Adrenal gland (tissue), 19 donors: ENCODE measurements at regions of chr11 and their contacts with region 1.

Region 1: DNA sequence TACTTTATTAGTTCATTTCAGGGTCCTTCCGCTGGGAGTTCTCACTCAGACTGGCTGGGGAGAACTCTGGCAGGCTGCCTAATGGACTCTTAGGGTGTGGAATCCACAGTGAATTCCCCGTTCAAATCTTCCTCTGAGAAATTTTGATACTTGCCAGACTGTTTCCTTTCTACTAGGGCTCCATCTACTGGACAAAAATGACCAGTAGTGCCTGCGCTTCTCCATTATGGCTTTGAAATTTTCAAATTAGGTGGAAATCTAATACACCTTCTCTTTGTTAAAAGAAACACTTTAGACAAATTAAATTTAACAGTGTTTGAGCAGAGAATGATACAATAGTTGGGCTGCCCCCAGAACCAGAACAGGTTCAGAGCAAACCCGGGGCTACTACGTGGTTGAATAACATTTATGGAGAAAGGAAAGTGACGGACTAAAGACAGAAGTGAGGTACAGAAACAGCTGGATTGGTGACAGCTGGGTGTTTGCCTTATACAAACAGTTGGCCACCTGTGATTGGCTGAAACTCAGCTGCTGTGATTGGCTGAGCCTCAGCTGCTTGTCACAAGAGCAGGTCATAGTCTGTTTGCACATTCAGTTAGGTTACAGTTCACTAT is 52.9 kb upstream of the FDX1 start:
- DNase-seq: peak; percentile 76 to 93 (median 87)
- H3K4me3 ChIP-seq: peak overlapping the region in 1 of 4 donors; percentile 43
- H3K27ac ChIP-seq: peak overlapping the region; percentile 49 to 87 (median 72)
- H3K4me1 ChIP-seq: peaks cover 40 to 73% of the 10 kb centered on the region in 2 donors
- H3K27me3 ChIP-seq: no peaks in the 10 kb centered on the region
- CTCF ChIP-seq: peak; percentile 68 to 88 (median 82)
- POLR2A ChIP-seq: peak in 1 of 2 donors; percentile 60

Region 2: GRCh38 chr11:110429731-110430266 is 53.0 kb after region 1 on chr11 and contains the start of gene FDX1:
- intact Hi-C with region 1: loop called in 1 of 2 experiments (anchors 10 kb)
- DNase-seq: peak; percentile 89 to 93 (median 92)
- H3K4me3 ChIP-seq: peak within 1 kb of the TSS; percentile 47 to 100 (median 80)
- H3K27ac ChIP-seq: peak within 1 kb of the TSS; percentile 89 to 98 (median 96)
- H3K4me1 ChIP-seq: peaks cover 17 to 26% of the 10 kb centered on the region in 2 donors
- H3K27me3 ChIP-seq: no peaks in the 10 kb centered on the region
- CTCF ChIP-seq: peak in 3 of 6 experiments; percentile 56 to 85 (median 80)
- POLR2A ChIP-seq: peak; percentile 88 to 90
- total RNA-seq, gene FDX1: 124 to 1,285 (median 324) TPM

Region 3: DNA sequence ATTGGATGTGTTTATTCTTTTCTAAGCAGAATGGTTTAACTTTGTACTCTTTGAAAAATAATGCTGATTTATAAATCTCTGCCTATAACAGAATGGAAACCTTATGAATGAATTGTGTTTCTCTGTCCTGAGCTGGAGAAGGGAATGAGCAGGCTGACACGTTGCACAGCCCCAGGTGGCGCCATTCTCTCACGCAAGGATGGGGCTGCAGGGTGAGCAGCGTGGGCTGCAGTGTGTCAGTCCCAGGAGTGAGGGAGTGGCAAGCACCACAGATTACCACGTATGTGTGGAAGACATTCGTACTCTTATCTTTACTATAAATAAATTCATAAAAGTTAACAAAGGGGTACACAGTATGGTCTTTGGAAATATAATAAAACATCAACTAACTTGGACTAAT is 86.3 kb after region 1 on chr11:
- intact Hi-C with region 1: no loop called
- DNase-seq: peak in 1 of 7 donors; percentile 52
- H3K4me3 ChIP-seq: no peak overlapping the region
- H3K27ac ChIP-seq: no peak overlapping the region
- H3K4me1 ChIP-seq: peaks cover 4 to 17% of the 10 kb centered on the region in 2 donors
- H3K27me3 ChIP-seq: no peaks in the 10 kb centered on the region
- CTCF ChIP-seq: peak in 5 of 6 experiments; percentile 9 to 49 (median 47)
- POLR2A ChIP-seq: no peak